ENCODE measurements at regions of chr2 and their contacts with region 1.

Region 1: DNA sequence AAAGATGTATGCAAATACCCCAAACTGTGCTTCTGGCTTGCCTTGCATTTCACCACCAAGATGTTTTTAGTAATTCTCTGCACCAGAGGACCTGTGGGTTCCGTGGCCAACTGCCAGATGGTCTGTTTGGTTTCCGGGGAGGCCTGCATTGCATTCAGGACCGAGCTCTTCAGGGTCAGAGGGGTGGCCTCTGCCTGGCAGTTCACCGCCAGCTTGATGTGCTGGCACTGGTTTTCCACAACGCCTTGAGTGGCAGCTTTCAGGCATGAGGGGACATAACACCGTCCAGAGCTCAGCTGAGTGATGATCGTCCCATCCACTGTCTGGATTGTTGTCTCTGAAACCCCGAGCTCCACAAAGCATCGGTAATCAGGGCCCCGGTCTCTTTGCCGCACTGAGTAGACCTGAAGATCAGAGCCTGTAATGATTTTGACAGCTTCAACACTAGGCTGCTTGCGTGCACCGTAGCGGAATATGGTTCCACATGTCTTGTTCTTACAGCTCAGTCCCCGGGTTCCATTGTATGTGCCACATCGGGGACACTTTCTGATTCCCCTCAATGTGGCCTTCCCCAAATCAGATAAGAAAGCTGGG is 9.4 kb downstream of the C2orf42 start:
- DNase-seq: peak; percentile 88
- ATAC-seq: peak; percentile 94
- H3K4me3 ChIP-seq: peak overlapping the region; percentile 18; the same call in 1 of the 2 replicates
- H3K27ac ChIP-seq: peak overlapping the region; percentile 90
- H3K4me1 ChIP-seq: peaks cover 21% of the 10 kb centered on the region
- H3K27me3 ChIP-seq: no peaks in the 10 kb centered on the region
- CTCF ChIP-seq: no peak
- EP300 ChIP-seq: 0 out of 4 replicates have a peak, but pooled peaks of 1 of the 2 experiments have one; percentile 26
- POLR2A ChIP-seq: peak; percentile 90
- RAD21 ChIP-seq: no peak

Region 2: GRCh38 chr2:69933839-69934613 is 247.4 kb before region 1 on chr2:
- CTCF ChIA-PET with region 1: no interaction called
- POLR2A ChIA-PET with region 1: no interaction called
- RAD21 ChIA-PET with region 1: no interaction called
- SMC1A ChIA-PET with region 1: no interaction called
- in situ Hi-C with region 1: no loop called
- intact Hi-C with region 1: no loop called
- DNase-seq: no peak
- ATAC-seq: peak; percentile 52
- H3K4me3 ChIP-seq: no peak overlapping the region
- H3K27ac ChIP-seq: no peak overlapping the region
- H3K4me1 ChIP-seq: peaks cover 17% of the 10 kb centered on the region
- H3K27me3 ChIP-seq: no peaks in the 10 kb centered on the region
- CTCF ChIP-seq: no peak
- EP300 ChIP-seq: no peak
- POLR2A ChIP-seq: no peak
- RAD21 ChIP-seq: no peak

Region 3: DNA sequence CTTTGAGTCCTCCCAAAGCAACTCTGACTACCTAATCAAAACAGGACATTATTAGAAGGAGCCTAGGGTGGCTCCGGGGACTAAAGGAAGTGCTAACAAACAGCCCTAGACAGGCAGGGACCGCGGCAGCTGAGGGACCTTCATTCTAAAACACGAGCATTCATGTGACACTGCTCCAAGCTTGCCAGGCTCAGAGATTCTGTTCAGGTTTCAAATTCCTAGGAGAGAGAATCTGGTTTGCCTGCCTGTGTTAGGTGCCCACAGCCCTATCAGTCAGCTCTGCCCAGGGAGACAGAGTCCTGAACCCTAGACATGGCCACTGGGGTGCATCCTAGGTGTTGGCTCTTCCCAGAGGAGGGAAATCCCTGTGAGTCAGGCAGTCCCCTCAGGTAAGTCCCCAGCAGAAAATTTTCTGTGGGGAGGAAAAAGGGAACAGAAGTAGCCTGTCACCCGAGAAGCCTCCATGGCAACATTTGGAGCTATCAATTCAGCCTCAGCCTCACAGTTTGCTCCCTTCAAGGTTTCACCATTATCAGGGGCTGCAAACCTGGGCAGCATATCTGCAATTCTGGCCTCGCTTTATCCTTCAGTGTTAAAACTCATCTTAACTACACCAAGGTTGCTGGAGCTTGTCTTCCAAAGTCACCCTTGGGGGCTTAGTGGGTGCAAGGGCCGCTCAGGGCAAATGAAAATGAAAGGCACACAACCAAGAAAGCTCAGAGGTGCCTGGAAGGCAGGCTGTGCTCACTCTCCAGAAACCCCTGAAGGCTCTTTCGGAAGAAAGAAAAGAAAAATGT is 65.6 kb before region 1 on chr2:
- CTCF ChIA-PET with region 1: no interaction called
- POLR2A ChIA-PET with region 1: no interaction called
- RAD21 ChIA-PET with region 1: no interaction called
- SMC1A ChIA-PET with region 1: no interaction called
- in situ Hi-C with region 1: no loop called
- intact Hi-C with region 1: no loop called
- DNase-seq: no peak
- ATAC-seq: peak; percentile 78
- H3K4me3 ChIP-seq: peak overlapping the region; percentile 30; the same call in 1 of the 2 replicates
- H3K27ac ChIP-seq: peak overlapping the region; percentile 88
- H3K4me1 ChIP-seq: peaks cover 51% of the 10 kb centered on the region
- H3K27me3 ChIP-seq: no peaks in the 10 kb centered on the region
- CTCF ChIP-seq: peak in 1 of 3 experiments; percentile 27; a peak in 2 of 6 replicates
- EP300 ChIP-seq: 0 out of 4 replicates have a peak, but pooled peaks of 1 of the 2 experiments have one; percentile 34
- POLR2A ChIP-seq: no peak
- RAD21 ChIP-seq: no peak

Region 4: DNA sequence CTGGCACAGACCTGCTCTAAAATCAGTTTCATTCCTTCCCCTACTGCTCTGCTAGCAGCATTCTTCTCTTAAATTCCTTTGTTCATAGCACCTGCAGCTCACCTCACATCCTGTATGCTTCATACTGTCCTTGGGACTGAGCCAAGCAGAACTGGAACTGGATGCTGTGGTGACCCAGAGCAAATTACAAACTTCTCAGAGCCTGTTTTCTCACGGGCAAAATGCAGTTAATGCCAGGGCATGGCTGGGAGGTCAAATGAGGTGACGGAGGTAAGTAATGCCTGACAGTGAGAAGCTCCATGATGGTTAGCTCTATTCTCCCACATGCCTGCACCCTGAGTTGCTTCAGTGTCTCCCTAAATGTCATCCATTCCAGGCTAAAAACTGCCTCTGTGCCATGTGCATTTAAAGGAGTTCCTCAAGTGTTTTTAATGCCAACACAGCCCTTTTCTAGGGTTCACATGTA is 20.4 kb before region 1 on chr2:
- CTCF ChIA-PET with region 1: interaction called, 14 read pairs
- POLR2A ChIA-PET with region 1: interaction called, 10 read pairs
- RAD21 ChIA-PET with region 1: interaction called, 8 read pairs
- SMC1A ChIA-PET with region 1: interaction called, 29 read pairs
- in situ Hi-C with region 1: no loop called
- intact Hi-C with region 1: no loop called
- DNase-seq: peak; percentile 99
- ATAC-seq: peak; percentile 95
- H3K4me3 ChIP-seq: no peak overlapping the region; the same call in 1 of the 2 replicates
- H3K27ac ChIP-seq: peak overlapping the region; percentile 78
- H3K4me1 ChIP-seq: peaks cover 18% of the 10 kb centered on the region
- H3K27me3 ChIP-seq: no peaks in the 10 kb centered on the region
- CTCF ChIP-seq: no peak
- EP300 ChIP-seq: peak; percentile 56 to 86; a peak in 3 of 4 replicates
- POLR2A ChIP-seq: no peak
- RAD21 ChIP-seq: no peak